PC-3 (cell line): ENCODE measurements at regions of chr1 and their contacts with region 1.

Region 1: GRCh38 chr1:32122151-32122550 is 14.3 kb downstream of the KPNA6 start:
- DNase-seq: no peak
- ATAC-seq: no peak
- H3K4me3 ChIP-seq: no peak overlapping the region
- H3K27ac ChIP-seq: no peak overlapping the region
- H3K4me1 ChIP-seq: no peaks in the 10 kb centered on the region
- H3K27me3 ChIP-seq: no peaks in the 10 kb centered on the region
- CTCF ChIP-seq: no peak

Region 2: DNA sequence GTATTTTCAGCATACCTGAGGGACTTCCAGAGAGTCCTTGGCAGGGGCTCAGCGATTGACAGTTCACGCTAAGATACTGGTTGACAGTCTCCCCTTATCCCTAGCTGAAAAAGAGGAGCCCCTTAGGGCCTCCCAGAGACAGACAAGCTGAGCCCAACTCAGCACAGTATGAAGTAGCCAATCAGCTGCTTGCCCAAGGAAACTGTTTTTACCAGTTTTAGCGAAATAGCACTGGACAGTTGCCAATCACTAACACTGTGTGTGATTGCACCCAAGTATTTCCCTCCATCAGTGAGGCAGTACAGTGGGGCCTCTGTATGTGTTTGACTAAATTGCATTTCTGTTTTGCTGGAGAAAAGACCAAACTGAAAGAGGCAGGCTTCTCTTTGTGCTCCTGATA is 81.4 kb before region 1 on chr1:
- CTCF ChIA-PET with region 1: interaction called, 13 read pairs
- POLR2A ChIA-PET with region 1: no interaction called
- intact Hi-C with region 1: no loop called
- DNase-seq: no peak
- ATAC-seq: no peak
- H3K4me3 ChIP-seq: no peak overlapping the region
- H3K27ac ChIP-seq: no peak overlapping the region
- H3K4me1 ChIP-seq: no peaks in the 10 kb centered on the region
- H3K27me3 ChIP-seq: no peaks in the 10 kb centered on the region
- CTCF ChIP-seq: no peak

Region 3: DNA sequence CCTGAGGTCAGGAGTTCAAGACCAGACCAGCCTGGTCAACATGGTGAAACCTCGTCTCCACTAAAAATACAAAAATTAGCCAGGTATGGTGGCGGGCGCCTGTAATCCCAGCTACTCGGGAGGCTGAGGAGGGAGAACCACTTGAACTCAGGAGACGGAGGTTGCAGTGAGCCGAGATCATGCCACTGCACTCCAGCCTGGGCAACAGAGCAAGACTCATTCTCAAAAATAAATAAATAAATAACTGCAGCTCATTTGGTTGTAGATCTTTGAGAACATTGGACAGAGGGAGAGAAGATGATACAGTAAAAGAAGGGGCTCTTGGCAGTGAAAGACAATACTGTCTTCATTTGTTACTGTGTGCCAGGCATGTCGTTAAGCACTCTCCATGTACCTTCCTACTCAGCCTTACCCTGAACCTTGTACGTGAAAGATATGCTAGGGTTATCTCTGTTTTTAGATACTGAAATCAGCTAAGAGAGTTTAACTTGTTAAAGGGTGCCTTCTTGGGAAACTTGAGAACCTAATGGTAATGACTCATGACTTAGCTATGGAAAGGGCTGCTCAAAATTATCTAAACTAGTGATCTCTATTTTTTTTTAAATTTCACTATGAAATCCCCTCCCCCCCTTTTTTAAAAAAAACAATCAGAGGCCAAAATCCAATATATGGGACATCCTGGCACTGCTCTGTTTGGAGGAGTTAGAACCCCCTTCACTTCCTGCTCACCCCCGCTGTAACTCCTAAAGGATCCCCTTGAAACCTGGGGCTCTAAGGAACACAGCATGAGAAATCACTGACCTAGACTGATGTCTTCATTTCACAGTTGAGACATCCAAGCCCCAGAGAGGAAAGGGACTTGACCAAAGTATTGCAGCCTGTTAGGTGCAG is 21.1 kb before region 1 on chr1:
- CTCF ChIA-PET with region 1: no interaction called
- POLR2A ChIA-PET with region 1: no interaction called
- intact Hi-C with region 1: no loop called
- DNase-seq: peak; percentile 73
- ATAC-seq: peak; percentile 81
- H3K4me3 ChIP-seq: no peak overlapping the region
- H3K27ac ChIP-seq: no peak overlapping the region
- H3K4me1 ChIP-seq: peaks cover 18% of the 10 kb centered on the region
- H3K27me3 ChIP-seq: no peaks in the 10 kb centered on the region
- CTCF ChIP-seq: no peak